PC-3 (cell line): ENCODE measurements at regions of chr9 and their contacts with region 1.

Region 1: GRCh38 chr9:15592317-15592716 is 39.5 kb downstream of the CCDC171 start:
- DNase-seq: no peak
- ATAC-seq: no peak
- H3K4me3 ChIP-seq: no peak overlapping the region
- H3K27ac ChIP-seq: no peak overlapping the region
- H3K4me1 ChIP-seq: no peaks in the 10 kb centered on the region
- H3K27me3 ChIP-seq: no peaks in the 10 kb centered on the region
- CTCF ChIP-seq: no peak

Region 2: DNA sequence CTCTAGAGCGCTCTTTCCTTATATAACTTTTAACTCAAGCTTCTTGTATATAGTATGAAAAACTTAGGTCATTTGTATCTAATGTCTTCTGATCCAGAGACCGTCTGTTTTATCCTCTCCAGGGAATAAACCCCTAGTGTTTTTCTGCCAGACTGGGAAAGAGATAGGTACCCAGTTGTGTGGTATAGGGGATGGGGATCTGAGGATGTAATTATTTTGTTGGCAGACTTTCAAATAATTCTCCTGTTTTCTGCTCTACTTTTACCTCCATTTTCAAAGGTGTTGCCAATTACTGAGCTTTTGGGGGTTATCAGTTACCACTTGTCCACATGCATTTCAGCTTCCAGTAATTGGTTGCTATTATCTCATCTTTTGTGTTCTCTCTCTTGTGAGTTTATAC is 21.5 kb before region 1 on chr9:
- CTCF ChIA-PET with region 1: no interaction called
- POLR2A ChIA-PET with region 1: no interaction called
- intact Hi-C with region 1: loop called (anchors 2 kb)
- DNase-seq: no peak
- ATAC-seq: no peak
- H3K4me3 ChIP-seq: no peak overlapping the region
- H3K27ac ChIP-seq: no peak overlapping the region
- H3K4me1 ChIP-seq: no peaks in the 10 kb centered on the region
- H3K27me3 ChIP-seq: no peaks in the 10 kb centered on the region
- CTCF ChIP-seq: no peak